ENCODE measurements at regions of chr13 and their contacts with region 1.

Region 1: DNA sequence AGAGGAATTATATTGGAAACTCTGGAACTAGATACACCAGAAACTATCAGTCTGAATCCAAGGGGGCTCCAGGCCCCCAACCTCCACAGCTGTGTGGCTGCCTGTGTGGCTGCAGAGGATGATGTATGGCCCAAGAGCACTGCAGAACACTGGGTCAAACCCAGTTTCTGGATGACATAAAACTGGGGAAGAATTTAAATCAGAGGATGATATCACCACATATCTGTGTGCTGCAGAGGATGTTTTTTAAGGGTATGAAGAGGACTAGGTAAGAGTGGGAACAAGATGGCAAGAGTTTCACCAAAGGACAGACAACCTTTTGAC is 226.4 kb downstream of the SUCLA2 start:
- DNase-seq: no peak
- ATAC-seq: no peak
- H3K4me3 ChIP-seq: no peak overlapping the region
- H3K27ac ChIP-seq: no peak overlapping the region
- H3K4me1 ChIP-seq: peaks cover 0 to 7% (median 0%) of the 10 kb centered on the region in 9 donors
- H3K27me3 ChIP-seq: no peaks in the 10 kb centered on the region
- CTCF ChIP-seq: no peak

Region 2: GRCh38 chr13:46648166-46648635 is 1126.4 kb before region 1 on chr13:
- intact Hi-C with region 1: no loop called
- DNase-seq: no peak
- ATAC-seq: peak in 5 of 8 donors; percentile 35 to 69 (median 68)
- H3K4me3 ChIP-seq: no peak overlapping the region
- H3K27ac ChIP-seq: no peak overlapping the region
- H3K4me1 ChIP-seq: peaks cover 8 to 78% (median 48%) of the 10 kb centered on the region in 9 donors
- H3K27me3 ChIP-seq: no peaks in the 10 kb centered on the region
- CTCF ChIP-seq: no peak

Region 3: DNA sequence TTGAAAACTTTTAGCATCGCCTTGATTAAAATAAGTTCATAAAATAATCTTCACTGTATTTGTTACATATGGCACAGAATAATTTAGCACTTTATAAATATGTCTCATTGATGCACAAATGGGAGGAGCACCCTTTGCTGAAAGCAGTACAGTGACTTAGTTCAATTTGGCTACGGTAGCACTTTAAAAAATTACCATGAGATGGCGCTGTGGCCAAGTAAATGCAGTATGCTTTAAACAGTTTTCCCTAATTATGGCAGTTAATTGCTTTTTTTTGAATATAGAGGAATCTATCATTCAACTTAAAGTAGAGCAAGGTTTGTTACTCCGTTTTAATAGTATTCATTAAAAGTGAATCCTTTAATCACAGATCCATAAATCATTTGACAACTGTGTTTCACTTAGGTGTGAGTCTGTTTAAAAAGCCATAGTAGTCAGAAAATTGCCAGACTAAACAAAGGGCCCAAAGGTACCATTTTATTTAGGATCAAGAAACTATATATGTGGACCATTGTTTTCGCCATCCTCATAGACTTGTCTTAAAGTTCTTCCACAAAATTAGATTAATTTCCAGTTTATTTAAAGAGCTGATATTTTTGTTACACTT is 942.9 kb before region 1 on chr13:
- intact Hi-C with region 1: loop called in 9 of 10 experiments (anchors 2 to 10 kb)
- DNase-seq: peak in 1 of 2 donors; percentile 24
- ATAC-seq: no peak
- H3K4me3 ChIP-seq: no peak overlapping the region
- H3K27ac ChIP-seq: no peak overlapping the region
- H3K4me1 ChIP-seq: no peaks in the 10 kb centered on the region
- H3K27me3 ChIP-seq: no peaks in the 10 kb centered on the region
- CTCF ChIP-seq: peak; percentile 44 to 80 (median 75)

Region 4: GRCh38 chr13:46964789-46965527 is 809.7 kb before region 1 on chr13:
- intact Hi-C with region 1: loop called in 5 of 10 experiments (anchors 5 to 10 kb)
- DNase-seq: no peak
- ATAC-seq: no peak
- H3K4me3 ChIP-seq: no peak overlapping the region
- H3K27ac ChIP-seq: no peak overlapping the region
- H3K4me1 ChIP-seq: no peaks in the 10 kb centered on the region
- H3K27me3 ChIP-seq: peaks cover 0 to 7% (median 0%) of the 10 kb centered on the region in 7 donors
- CTCF ChIP-seq: no peak

Region 5: DNA sequence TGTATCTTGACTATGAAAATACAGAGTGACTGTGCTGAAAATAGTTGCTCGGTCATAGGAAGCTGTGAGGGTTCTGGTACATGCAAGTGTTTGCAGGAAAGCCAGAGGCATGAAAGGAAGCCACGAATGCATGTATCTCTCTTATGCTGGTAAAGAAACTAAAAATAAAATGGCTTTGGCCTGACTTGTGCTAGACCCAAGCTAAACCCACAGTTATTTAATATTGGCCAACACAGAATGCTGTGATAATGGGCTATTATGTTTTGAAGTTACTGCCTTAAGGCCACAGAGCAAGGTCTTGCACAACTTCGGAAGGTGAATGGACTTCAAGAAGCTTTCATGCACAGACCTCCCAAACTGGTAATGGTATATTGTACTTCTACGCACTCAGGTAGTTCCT is 359.6 kb before region 1 on chr13:
- intact Hi-C with region 1: loop called in 9 of 10 experiments (anchors 5 to 10 kb)
- DNase-seq: no peak
- ATAC-seq: no peak
- H3K4me3 ChIP-seq: no peak overlapping the region
- H3K27ac ChIP-seq: no peak overlapping the region
- H3K4me1 ChIP-seq: no peaks in the 10 kb centered on the region
- H3K27me3 ChIP-seq: no peaks in the 10 kb centered on the region
- CTCF ChIP-seq: no peak

Region 6: GRCh38 chr13:47426126-47426849 is 348.3 kb before region 1 on chr13:
- intact Hi-C with region 1: loop called in 5 of 10 experiments (anchors 5 to 10 kb)
- DNase-seq: peak in 1 of 2 donors; percentile 27
- ATAC-seq: peak in 7 of 8 donors; percentile 34 to 94 (median 84)
- H3K4me3 ChIP-seq: no peak overlapping the region
- H3K27ac ChIP-seq: no peak overlapping the region
- H3K4me1 ChIP-seq: peaks cover 0 to 9% (median 0%) of the 10 kb centered on the region in 9 donors
- H3K27me3 ChIP-seq: no peaks in the 10 kb centered on the region
- CTCF ChIP-seq: no peak

Measured in heart right ventricle (tissue), 16 donors.